BJ (cell line): ENCODE measurements at regions of chr6 and their contacts with region 1.

Region 1: DNA sequence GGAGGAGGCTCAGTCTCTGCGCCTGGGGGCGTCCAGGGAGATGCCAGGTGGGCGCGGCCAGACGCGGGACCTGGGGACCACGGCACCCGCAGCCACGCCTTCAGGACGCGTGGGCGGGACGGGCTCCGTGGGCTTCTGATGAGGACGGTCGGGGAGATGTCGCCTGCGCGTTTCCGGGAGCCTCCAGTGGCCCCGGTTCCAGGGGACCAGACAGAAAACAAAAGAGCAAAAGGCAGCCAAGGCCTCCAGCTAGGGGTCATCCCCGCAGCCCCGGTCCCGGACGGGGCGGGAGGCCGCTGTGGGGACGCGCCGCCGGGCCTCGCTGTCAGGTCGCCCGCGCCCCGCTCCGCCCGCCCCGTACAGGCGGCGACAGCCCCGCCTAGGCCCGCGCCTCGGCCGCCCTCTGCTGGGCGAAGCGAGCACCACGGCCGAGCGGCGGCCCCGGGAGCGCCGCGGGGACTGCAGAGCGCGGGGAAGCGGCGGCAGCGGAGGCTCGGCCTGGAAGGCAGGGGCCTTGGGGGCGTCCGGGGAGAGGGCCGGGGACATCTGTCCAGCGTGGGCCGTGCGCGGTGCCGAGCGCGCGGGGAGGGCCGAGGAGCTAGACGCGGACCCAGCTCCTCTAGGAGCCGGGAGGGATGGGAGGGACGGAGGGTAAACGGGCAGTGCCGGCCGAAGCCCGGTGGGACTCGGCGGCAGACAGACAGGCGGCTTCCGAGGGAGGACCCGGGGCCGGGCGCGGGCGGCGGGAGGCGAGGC is 48.7 kb downstream of the TMEM242 start:
- DNase-seq: no peak
- H3K4me3 ChIP-seq: peak overlapping the region; percentile 56
- H3K27me3 ChIP-seq: no peaks in the 10 kb centered on the region
- CTCF ChIP-seq: peak; percentile 9; the same call in 1 of the 2 replicates

Region 2: GRCh38 chr6:157235600-157236039 is 39.0 kb before region 1 on chr6:
- CTCF ChIA-PET with region 1: interaction called, 11 read pairs
- POLR2A ChIA-PET with region 1: no interaction called
- DNase-seq: no peak
- H3K4me3 ChIP-seq: peak overlapping the region; percentile 41
- H3K27me3 ChIP-seq: peaks cover 7% of the 10 kb centered on the region; the same call in 1 of the 2 replicates
- CTCF ChIP-seq: peak; percentile 70

Region 3: DNA sequence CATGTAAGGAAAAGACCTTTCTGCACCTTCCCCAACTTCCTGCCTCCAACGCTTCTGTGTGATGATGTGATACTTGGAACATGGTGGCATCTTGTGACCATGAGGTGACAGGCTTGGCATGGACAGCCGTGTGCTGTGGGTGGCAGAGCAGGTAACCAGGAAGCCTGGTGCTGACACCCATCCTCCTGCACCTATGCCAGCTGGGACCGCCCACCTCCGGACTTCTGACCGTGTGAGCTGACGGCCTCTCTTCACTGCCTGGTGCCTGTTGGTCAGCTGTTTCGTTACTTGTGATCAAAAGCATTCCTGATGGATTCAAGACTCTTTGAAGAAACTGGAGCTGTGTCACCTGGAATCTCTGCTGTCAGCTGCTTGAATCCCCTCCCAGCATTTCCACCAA is 21.6 kb before region 1 on chr6:
- CTCF ChIA-PET with region 1: interaction called, 15 read pairs
- POLR2A ChIA-PET with region 1: interaction called, 12 read pairs
- DNase-seq: no peak
- H3K4me3 ChIP-seq: no peak overlapping the region
- H3K27me3 ChIP-seq: peaks cover 19% of the 10 kb centered on the region
- CTCF ChIP-seq: no peak